ENCODE measurements at regions of chr2 and their contacts with region 1.

Region 1: GRCh38 chr2:176088048-176088936 is 4.2 kb upstream of the HOXD13 start:
- DNase-seq: peak in 40 of 42 donors; percentile 20 to 78 (median 54)

Region 2: DNA sequence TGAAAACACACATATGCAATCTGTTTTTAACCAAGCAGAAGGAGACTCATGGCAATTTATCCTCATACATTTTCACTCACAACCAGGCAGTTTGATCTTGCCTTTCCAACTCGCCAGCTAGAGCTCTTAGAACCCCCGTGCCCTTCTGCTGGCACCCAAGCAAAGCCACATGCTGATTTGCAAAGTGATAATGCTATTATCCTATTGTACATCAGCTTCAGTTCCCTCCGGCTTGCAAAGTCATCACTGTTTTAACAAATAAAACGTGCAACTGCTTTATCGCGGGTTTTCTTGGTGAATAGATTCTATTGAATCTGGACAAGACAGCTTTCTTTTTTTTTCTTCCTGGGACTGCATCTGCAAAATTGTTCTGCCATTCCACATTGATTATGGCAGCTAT is 400.8 kb before region 1 on chr2:
- intact Hi-C with region 1: loop called (anchors 5 kb)
- DNase-seq: no peak

Region 3: DNA sequence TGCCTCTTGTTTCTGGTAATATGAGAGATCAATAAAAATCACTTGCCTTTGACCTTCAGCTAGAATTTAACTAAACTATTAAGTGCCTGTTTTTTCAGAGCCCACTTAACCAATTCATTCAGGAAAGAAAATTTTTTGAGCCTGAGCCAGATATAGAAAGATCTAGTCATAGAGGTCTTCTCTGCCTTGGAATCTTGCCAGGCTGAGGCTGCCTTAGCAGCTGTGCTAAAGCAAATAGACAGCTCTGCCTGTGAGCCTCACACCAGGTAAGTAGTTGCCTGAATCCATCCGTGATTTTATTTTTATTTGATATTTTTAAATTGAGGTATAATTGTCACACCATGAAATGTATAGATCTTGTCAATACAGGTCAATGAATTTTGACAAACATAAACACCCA is 31.9 kb before region 1 on chr2:
- intact Hi-C with region 1: no loop called
- DNase-seq: no peak